ENCODE measurements at regions of chr9 and their contacts with region 1.

Region 1: GRCh38 chr9:136502942-136503550 is 20.2 kb upstream of the SEC16A start:
- DNase-seq: no peak
- H3K4me3 ChIP-seq: no peak overlapping the region
- H3K27ac ChIP-seq: no peak overlapping the region
- H3K4me1 ChIP-seq: no peaks in the 10 kb centered on the region
- H3K27me3 ChIP-seq: no peaks in the 10 kb centered on the region

Region 2: GRCh38 chr9:136363606-136364370 is 139.3 kb before region 1 on chr9 and contains the start of gene DNLZ:
- CTCF ChIA-PET with region 1: no interaction called
- POLR2A ChIA-PET with region 1: no interaction called
- DNase-seq: peak; percentile 84 to 92 (median 88)
- H3K4me3 ChIP-seq: peak within 1 kb of the TSS; percentile 63 to 89 (median 80)
- H3K27ac ChIP-seq: peak within 1 kb of the TSS in 1 of 2 experiments; percentile 43
- H3K4me1 ChIP-seq: peaks cover 0 to 28% (median 19%) of the 10 kb centered on the region in 4 experiments
- H3K27me3 ChIP-seq: peaks cover 0 to 3% (median 0%) of the 10 kb centered on the region in 5 experiments

Region 3: DNA sequence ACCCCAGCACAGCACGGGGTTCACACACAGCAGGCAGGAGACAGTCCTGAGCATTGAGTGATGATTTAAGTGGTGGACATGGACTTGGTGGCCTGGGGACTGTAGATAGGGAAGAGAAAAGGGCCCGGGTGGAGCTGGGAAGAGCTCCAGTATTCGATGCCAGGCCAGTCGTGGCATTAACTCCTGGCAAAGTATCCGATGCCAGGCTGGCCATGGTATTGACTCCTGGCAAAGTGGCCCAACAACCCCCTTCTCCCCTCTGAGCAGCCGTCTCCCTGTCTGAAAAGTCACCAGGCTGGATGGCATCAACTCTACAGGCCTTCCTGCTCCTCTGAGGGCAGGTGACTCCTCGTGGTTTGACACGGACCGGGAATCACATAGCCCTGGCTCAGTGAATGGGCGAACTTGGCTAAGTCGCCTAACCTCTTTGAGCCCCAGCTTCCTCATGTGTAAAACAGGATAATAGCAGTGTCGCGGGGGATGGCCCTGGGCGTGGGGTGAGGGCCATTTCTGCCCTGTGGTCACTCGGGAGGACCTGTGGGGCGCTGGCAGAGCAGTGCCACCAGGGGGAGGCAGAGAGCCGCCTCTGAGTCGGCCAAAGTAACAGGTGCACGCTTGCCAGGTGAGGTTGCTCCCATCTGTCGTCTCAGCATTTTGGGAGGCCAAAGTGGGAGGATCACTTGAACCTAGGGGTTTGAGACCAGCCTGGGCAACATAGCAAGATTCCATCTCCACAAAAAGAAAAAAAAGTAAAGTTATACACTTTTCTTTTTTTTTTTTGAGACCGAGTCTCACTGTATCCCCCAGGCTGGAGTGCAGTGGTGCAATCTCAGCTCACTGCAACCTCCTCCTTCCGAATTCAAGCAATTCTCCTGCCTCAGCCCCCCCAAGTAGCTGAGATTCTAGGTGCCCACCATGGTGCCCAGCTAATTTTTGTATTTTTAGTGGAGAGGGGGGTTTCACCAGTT is 14.5 kb before region 1 on chr9:
- CTCF ChIA-PET with region 1: interaction called, 27 read pairs
- POLR2A ChIA-PET with region 1: no interaction called
- DNase-seq: peak; percentile 40 to 56 (median 49)
- H3K4me3 ChIP-seq: no peak overlapping the region
- H3K27ac ChIP-seq: no peak overlapping the region
- H3K4me1 ChIP-seq: peaks cover 0 to 34% (median 21%) of the 10 kb centered on the region in 4 experiments
- H3K27me3 ChIP-seq: no peaks in the 10 kb centered on the region

Region 4: DNA sequence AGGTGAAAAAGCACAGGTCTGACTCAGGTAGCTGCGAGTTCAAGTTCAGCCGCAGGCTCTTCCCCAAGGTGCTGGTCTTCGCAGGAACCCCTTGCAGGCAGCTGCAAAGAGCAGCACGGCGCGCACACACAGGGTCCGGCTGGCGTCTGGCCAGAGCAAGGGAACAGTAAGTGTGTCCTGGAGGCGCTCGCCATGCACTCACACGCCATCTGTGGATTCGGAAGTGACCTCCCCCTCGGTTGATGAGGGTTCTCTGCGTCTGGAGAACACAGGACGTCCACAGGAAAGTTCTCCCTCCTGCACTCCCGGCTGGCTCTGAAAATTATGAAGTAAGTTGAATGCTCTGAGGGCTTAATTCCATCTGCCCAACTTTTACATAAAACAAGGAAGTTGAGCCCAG is 145.7 kb after region 1 on chr9:
- CTCF ChIA-PET with region 1: no interaction called
- POLR2A ChIA-PET with region 1: no interaction called
- DNase-seq: peak in 2 of 3 donors; percentile 43 to 54
- H3K4me3 ChIP-seq: peak overlapping the region in 4 of 7 experiments; percentile 23 to 62 (median 58)
- H3K27ac ChIP-seq: peak overlapping the region; percentile 50 to 54
- H3K4me1 ChIP-seq: peaks cover 0 to 95% (median 79%) of the 10 kb centered on the region in 4 experiments
- H3K27me3 ChIP-seq: no peaks in the 10 kb centered on the region